Activated T-helper 1 cell treated with anti-CD3 and anti-CD28 coated beads, Interleukin-12 subunit alpha, Interleukin-12 subunit beta, Interleukin-2, Interleukin-4 antibody, amounts not matched to agents 30 ng/mL and 10 ng/mL and 1 ng/mL, durations not matched to agents 14 hours and 24 hours and 36 hours (primary cell): ENCODE measurements at regions of chr12 and their contacts with region 1.

Region 1: DNA sequence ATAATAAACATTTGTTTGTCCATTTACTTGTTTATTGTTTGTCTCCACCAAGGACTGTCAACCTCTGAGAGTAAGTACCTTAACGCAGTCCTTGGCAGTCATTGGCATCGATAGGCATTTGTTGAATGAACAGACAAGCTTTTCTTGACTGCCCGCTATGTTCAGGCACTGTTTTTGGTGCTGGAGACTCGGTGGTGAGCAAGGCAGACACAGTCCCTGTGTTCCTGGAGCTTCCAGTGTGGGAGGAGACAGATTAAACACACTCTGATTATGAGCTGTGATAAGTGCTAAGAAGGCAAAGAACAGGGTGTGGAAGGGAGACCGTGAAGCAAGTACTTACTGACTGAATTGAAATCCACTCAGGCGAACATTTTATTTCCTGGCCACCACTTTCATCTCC is 1.2 kb downstream of the ATP6V0A2 start:
- DNase-seq: peak; percentile 8
- H3K4me3 Mint-ChIP-seq: peak overlapping the region; percentile 91
- H3K27ac Mint-ChIP-seq: peak overlapping the region; percentile 85
- H3K4me1 Mint-ChIP-seq: peaks cover 41% of the 10 kb centered on the region
- H3K27me3 Mint-ChIP-seq: no peaks in the 10 kb centered on the region

Region 2: GRCh38 chr12:123271001-123271729 is 442.2 kb before region 1 on chr12:
- intact Hi-C with region 1: loop called (anchors 2 kb)
- DNase-seq: peak; percentile 68
- H3K4me3 Mint-ChIP-seq: no peak overlapping the region
- H3K27ac Mint-ChIP-seq: no peak overlapping the region
- H3K4me1 Mint-ChIP-seq: peaks cover 9% of the 10 kb centered on the region
- H3K27me3 Mint-ChIP-seq: peaks cover 5% of the 10 kb centered on the region

Region 3: GRCh38 chr12:123601602-123602489 is 111.6 kb before region 1 on chr12 and contains the start of gene DDX55:
- intact Hi-C with region 1: loop called (anchors 10 kb)
- DNase-seq: peak; percentile 83
- H3K4me3 Mint-ChIP-seq: peak within 1 kb of the TSS; percentile 87
- H3K27ac Mint-ChIP-seq: peak within 1 kb of the TSS; percentile 90
- H3K4me1 Mint-ChIP-seq: peaks cover 36% of the 10 kb centered on the region
- H3K27me3 Mint-ChIP-seq: no peaks in the 10 kb centered on the region
- total RNA-seq, gene DDX55: 72.1 and 72.3 TPM in 2 replicates

Region 4: DNA sequence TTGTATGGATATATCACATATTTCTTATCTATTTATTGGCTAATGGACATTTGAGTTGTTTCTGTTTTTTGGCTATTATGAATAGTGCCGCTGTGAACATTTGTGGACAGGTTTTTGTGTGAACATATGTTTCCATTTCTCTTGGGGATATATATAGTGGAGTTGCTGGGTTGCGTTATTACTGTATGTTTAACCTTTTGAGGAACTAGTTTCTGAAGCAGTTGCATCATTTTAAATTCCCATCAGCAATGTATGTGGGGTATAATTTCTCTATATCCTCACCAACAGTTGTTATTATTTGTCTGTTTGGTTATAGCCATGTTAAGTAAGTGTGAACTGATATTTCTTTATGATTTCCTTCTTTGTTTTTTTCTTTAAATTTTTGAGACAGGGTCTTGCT is 31.8 kb before region 1 on chr12:
- intact Hi-C with region 1: no loop called
- DNase-seq: no peak
- H3K4me3 Mint-ChIP-seq: no peak overlapping the region
- H3K27ac Mint-ChIP-seq: no peak overlapping the region
- H3K4me1 Mint-ChIP-seq: no peaks in the 10 kb centered on the region
- H3K27me3 Mint-ChIP-seq: no peaks in the 10 kb centered on the region

Region 5: GRCh38 chr12:123743002-123743401 is 29.6 kb after region 1 on chr12:
- intact Hi-C with region 1: loop called (anchors 2 kb)
- DNase-seq: no peak
- H3K4me3 Mint-ChIP-seq: no peak overlapping the region
- H3K27ac Mint-ChIP-seq: peak overlapping the region; percentile 64
- H3K4me1 Mint-ChIP-seq: peaks cover 15% of the 10 kb centered on the region
- H3K27me3 Mint-ChIP-seq: no peaks in the 10 kb centered on the region

Region 6: DNA sequence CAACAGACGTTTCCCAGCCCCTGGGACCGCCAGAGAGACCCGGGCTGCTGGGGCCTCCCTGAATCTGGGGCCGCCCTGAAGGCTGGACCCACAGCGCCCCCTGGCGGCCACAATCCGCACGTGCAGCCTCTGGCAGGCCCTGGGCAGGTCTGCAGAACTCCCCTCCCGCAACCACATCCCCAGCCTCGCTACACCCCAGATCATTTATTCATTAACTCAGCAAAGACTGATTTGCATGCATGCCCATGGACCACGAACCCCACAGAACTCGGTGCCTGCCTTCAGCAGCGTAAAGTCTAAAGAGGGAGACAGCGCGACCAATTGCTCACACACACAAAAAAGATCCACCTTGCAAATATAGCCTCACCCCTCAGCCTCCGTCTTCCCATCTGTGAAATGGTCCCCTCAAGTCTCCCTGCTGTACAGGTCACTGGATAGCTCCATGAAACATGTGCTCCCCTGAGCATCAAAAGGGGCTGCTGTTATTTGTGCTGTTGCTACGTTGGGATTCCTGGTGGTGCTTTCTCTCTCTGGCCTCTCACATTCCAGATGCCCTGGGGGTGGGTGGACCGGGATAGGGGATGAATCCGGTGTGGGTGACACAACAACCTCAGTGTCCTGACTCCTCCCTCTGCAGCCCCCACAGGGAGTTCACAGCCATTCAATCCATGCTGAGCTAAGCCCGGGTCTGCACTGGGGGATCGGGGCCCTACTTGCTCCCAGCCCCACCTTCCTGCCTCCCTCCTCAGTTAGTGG is 1053.8 kb after region 1 on chr12:
- intact Hi-C with region 1: loop called (anchors 10 kb)
- DNase-seq: peak; percentile 76
- H3K4me3 Mint-ChIP-seq: no peak overlapping the region
- H3K27ac Mint-ChIP-seq: peak overlapping the region; percentile 29
- H3K4me1 Mint-ChIP-seq: peaks cover 27% of the 10 kb centered on the region
- H3K27me3 Mint-ChIP-seq: peaks cover 18% of the 10 kb centered on the region